Activated CD4-positive, alpha-beta memory T cell treated with anti-CD3 and anti-CD28 coated beads for 36 hours (primary cell): ENCODE measurements at regions of chr5 and their contacts with region 1.

Region 1: GRCh38 chr5:158875272-158875679 is 224.4 kb downstream of the EBF1 start:
- DNase-seq: no peak
- H3K4me3 Mint-ChIP-seq: no peak overlapping the region
- H3K27ac Mint-ChIP-seq: peak overlapping the region; percentile 39
- H3K4me1 Mint-ChIP-seq: peaks cover 27% of the 10 kb centered on the region
- H3K27me3 Mint-ChIP-seq: peaks cover 8% of the 10 kb centered on the region

Region 2: DNA sequence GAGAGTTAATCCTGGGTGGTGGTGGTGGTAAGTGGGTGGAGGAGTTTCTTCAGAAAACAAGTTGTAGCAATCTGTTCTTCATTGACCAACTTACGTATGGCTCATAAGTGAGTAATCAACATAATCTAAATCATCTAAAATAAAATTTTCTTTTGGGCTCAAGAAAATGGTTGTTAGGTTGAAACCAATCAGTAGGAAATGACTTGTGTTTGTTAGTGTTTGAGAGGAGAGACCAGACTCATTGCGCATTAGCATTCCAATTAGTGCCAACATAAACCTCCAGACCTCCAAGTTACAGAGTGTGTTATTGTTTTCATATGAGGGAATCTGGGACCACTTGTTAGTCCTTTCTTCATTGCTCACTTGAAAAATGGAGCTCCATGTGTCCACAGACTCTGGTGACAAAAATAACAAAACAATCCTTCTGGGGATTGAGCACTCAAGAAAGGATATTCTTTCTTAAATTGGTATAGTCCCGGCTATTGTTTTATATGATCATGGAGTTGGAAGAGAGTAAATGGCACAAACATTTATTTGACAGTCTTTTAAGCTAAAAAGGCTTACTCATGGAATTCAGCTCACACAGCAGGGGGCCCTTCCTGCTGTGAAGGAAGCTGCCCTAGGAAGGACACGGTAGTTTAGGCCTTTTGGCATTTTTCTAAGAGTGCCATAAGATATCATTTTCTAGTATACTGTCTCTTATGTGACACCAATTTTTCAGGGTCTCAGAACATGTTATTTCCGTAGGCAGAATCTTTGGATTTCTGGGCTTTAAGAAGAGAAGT is 216.6 kb before region 1 on chr5:
- CTCF ChIA-PET with region 1: no interaction called
- POLR2A ChIA-PET with region 1: no interaction called
- intact Hi-C with region 1: no loop called
- DNase-seq: no peak
- H3K4me3 Mint-ChIP-seq: no peak overlapping the region
- H3K27ac Mint-ChIP-seq: no peak overlapping the region
- H3K4me1 Mint-ChIP-seq: no peaks in the 10 kb centered on the region
- H3K27me3 Mint-ChIP-seq: peaks cover 14% of the 10 kb centered on the region

Region 3: DNA sequence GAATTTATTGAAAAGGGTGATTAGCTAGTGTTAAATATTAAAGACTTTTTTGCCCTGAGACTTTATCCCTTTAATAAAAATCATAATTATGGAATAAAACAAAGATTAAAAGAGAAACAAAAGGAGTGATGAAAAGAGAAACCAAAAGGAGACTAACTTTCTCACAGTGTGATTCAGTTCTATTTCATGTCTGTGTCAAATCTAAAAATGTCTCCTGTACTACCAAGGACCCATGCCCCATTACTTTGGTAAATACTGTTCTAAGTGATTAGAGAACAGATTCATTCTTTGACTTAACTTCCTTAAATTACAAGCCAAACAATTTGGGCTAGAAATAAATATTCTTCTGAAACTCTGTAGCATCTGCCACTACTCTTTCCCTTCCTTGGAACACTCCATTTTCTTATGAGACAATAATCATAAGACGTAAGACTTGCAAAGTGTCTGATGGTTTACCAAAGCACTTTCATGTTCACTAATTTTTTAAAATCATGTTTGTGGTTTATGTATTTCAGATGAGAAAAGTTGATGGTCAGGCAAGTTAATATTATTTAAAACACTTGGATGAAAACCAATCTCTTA is 94.5 kb before region 1 on chr5:
- CTCF ChIA-PET with region 1: no interaction called
- POLR2A ChIA-PET with region 1: no interaction called
- intact Hi-C with region 1: no loop called
- DNase-seq: no peak
- H3K4me3 Mint-ChIP-seq: no peak overlapping the region
- H3K27ac Mint-ChIP-seq: no peak overlapping the region
- H3K4me1 Mint-ChIP-seq: peaks cover 3% of the 10 kb centered on the region
- H3K27me3 Mint-ChIP-seq: peaks cover 4% of the 10 kb centered on the region

Region 4: DNA sequence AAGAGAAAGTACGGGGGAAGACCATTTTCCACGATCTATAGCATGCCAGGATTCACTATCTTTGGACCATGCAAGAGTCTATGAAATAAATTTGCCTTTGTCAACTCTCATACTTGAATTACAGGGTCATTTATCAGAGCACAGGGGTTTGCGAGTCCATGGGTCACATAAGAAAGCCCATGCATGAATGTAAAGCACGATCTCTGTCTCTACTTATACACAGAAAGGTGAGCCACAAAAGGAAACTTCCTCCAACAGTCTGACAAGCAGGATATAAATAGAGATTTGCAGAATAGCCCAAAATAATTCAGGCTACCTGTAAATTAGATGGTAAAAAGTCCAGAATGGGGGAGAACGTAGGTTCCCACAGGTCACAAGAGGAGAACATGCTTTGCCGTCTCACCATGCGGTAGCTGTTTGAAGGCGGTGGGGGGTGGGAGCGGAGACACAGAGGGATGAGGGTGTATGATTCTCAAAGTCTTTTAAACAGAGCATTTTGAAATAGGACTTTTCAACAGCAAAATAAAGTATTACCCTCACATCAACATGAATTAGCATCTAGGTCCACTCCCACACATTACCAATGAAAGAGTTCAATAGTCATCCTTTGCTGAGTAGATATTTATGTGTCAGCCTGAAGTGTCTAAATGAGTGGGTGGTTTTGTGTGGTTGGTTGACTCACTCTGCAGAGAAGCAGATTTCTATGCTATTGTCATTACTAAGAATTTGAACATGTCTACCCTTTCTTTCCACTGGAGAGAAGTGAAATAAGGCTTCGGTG is 55.2 kb before region 1 on chr5:
- CTCF ChIA-PET with region 1: no interaction called
- POLR2A ChIA-PET with region 1: no interaction called
- intact Hi-C with region 1: loop called (anchors 1 kb)
- DNase-seq: peak; percentile 27
- H3K4me3 Mint-ChIP-seq: no peak overlapping the region
- H3K27ac Mint-ChIP-seq: no peak overlapping the region
- H3K4me1 Mint-ChIP-seq: peaks cover 38% of the 10 kb centered on the region
- H3K27me3 Mint-ChIP-seq: peaks cover 12% of the 10 kb centered on the region

Region 5: DNA sequence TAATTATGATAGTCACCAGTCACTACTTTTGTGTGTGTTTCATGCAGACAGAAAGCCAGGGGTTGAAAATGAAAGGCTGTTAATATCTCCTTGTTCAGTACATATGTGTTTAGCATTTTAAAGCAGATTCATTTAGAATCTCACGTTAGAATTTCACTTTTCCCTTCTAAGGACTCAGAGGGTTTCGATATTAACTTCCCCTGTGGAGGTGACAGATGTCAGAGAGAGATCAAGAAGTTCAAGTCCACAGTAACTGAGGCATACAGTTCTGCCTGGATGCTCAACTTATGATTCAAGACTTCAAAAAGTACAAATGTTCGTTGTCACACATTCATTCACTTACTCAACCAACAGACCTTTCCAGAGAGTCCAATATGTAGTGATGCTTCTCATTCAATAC is 26.6 kb before region 1 on chr5:
- CTCF ChIA-PET with region 1: no interaction called
- POLR2A ChIA-PET with region 1: no interaction called
- intact Hi-C with region 1: loop called (anchors 2 kb)
- DNase-seq: no peak
- H3K4me3 Mint-ChIP-seq: no peak overlapping the region
- H3K27ac Mint-ChIP-seq: no peak overlapping the region
- H3K4me1 Mint-ChIP-seq: peaks cover 14% of the 10 kb centered on the region
- H3K27me3 Mint-ChIP-seq: peaks cover 4% of the 10 kb centered on the region

Region 6: DNA sequence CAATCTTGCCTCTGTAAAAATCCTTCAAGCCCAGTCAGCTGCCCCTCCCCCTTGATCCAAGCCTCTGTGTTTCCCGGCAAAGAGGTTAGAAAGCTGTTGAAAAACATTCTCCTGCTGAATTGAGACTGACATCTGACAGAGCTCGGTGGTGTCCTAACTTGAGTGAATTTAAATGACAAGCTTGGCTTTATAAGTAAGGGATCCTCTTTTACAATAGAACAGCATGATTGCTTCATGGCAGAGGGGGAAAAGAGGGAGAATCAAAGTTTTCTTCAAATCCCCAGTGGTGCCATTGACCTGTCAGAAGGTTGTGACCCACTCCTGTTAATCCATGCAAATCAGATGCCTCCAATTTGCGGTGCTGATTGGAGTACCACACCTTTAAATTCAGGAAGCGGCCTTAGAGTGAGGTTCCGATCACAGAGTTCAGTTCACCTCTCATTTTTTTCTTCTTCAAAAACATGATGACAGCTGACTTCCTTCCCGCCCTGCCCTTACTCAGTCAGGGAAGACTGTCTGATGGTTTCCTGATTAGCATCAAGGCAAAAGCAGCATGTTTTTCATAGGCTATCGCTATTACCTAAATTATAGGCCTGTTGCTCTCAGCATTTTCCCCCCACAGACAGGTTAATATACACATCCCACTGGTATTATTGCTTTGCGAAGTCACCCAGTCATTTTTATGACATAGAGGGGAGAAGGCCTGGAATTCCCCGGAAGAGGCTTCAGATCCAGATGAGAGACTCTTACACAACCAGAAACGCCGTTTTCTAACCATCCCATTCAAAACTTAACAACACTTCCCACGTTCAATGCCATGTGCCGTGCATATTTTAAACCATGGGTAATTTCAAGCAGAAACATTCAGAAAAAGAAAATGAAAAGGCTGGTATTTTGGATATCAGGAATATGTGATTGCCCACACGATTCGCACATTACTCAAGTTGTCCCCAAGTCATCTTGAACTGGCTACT is 83.0 kb after region 1 on chr5:
- CTCF ChIA-PET with region 1: no interaction called
- POLR2A ChIA-PET with region 1: no interaction called
- intact Hi-C with region 1: loop called (anchors 5 kb)
- DNase-seq: peak; percentile 31
- H3K4me3 Mint-ChIP-seq: no peak overlapping the region
- H3K27ac Mint-ChIP-seq: peak overlapping the region; percentile 8
- H3K4me1 Mint-ChIP-seq: peaks cover 20% of the 10 kb centered on the region
- H3K27me3 Mint-ChIP-seq: no peaks in the 10 kb centered on the region

Region 7: DNA sequence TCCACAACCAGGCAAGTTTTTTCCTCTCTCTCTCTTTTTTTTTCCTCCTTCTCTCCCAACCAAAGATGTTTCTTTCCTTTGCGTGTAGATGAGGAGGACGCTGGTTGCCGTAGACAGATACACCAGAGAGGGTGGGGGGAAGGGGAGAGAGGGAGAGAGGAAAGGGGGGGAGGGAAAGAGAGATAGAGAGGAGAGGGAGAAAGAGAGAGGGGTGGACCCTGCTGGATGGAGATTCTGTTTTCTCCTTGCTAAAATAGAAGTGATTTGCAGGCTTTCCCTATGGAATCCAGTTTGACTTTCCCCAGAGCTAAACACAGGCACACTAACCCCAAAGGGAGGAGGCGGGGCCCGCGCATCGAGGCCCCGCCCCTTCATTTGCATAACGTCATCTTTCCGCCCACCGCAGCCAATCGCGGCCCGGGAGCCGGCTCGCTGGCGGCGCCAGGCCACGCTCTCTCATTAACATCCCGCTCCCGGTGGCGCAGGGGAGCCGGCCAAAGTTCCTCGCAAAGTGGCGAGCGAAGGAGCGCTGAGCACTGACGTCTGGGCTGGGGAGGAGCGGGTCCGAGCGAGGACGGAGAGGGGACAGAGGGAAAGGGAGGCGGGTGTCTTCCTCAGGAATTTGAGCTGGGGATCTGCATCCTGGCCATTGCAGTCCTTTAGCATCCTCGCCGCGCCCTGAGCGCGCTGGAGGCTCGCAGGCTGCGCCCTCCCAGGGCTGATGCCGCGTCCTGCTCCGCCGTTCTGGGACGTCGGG is 224.9 kb after region 1 on chr5:
- CTCF ChIA-PET with region 1: no interaction called
- POLR2A ChIA-PET with region 1: no interaction called
- intact Hi-C with region 1: loop called (anchors 1 kb)
- DNase-seq: peak; percentile 90
- H3K4me3 Mint-ChIP-seq: peak overlapping the region; percentile 79
- H3K27ac Mint-ChIP-seq: peak overlapping the region; percentile 31
- H3K4me1 Mint-ChIP-seq: peaks cover 35% of the 10 kb centered on the region
- H3K27me3 Mint-ChIP-seq: peaks cover 58% of the 10 kb centered on the region